ENCODE measurements at regions of chr9 and their contacts with region 1.

Region 1: DNA sequence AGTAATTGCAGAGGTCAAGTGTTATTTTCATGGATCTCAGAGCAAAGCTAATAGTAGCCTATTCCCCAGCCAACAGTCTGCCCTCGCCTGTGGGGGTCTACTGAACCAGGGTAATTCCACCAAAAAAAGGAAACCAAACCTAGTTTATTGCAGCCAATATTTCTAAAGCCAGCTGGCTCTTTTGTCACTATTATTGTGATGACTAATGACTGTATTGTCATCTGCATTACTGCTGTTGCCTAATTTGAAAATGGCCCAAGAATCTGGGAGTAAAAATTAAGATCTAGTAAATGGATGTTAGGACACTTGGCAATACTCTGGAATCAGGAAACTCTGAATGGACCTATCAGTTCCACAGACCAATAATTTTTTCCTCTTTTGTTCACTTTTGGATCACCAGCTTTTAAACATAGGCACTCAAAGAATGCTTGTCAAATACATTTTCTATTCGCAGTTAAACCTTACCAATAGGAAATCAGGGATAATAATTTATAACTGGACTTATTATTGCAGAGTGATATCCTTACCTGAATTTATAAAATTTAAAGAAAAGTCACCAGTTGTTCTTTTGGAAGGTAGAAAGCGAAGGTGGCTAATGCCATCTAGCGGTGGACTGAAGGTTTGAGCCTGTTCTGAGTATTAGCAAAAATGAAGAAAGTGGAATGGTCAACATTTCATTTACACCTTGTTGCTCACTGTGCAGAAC is 69.2 kb downstream of the SYK start:
- DNase-seq: peak; percentile 59

Region 2: DNA sequence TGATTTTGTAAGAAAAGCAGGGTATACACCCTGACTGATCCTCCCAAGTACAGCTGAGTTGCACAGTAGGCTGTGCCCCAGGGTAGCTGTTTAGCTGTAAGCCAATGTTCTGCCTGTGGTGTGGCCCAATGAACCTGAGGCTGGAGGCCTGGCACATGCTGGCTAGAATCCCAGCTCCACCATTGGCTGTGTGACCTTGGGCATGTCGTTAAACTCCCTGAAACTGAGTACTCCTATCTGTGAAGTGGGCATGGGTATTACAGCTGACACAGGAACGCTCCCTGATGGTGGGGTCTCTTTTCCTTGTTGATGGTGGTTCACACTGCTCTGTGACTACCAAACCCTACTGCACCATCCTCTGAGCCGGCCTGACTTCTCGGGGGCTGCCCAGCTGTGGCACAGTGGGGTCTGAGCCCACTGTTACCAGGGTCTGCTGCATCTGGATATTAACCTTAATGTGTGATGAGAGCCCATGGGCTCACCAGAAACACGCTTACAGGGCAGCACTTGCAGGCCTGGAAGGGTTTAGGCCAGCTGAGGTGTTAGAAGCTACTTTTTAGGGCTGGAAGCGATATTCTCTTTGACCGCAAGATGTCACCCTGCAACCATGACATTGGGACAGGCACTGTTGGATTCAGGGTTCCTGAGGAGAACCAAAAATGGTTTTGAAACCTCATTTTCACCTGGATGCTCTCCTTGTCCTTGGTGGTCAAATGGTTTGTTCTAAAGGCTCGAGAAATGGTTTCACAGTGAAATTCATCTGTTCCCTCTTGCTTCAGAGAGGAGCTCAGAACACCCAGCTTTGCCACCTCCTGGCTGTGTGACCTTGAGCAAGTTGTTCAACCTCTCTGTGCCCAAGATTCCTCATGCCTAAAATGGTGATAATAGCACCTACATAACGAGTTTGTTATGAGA is 1272.8 kb before region 1 on chr9:
- in situ Hi-C with region 1: loop called (anchors 25 kb)
- DNase-seq: peak; percentile 71

Region 3: GRCh38 chr9:90219548-90220118 is 651.1 kb before region 1 on chr9:
- in situ Hi-C with region 1: loop called (anchors 25 kb)
- DNase-seq: peak; percentile 20

Measured in KBM-7 (cell line).